ENCODE measurements at regions of chr5 and their contacts with region 1.

Region 1: GRCh38 chr5:40736103-40736875 is 19.5 kb downstream of the TTC33 start:
- DNase-seq: no peak
- H3K4me3 Mint-ChIP-seq: no peak overlapping the region
- H3K27ac Mint-ChIP-seq: no peak overlapping the region
- H3K4me1 Mint-ChIP-seq: peaks cover 23% of the 10 kb centered on the region
- H3K27me3 Mint-ChIP-seq: no peaks in the 10 kb centered on the region

Region 2: DNA sequence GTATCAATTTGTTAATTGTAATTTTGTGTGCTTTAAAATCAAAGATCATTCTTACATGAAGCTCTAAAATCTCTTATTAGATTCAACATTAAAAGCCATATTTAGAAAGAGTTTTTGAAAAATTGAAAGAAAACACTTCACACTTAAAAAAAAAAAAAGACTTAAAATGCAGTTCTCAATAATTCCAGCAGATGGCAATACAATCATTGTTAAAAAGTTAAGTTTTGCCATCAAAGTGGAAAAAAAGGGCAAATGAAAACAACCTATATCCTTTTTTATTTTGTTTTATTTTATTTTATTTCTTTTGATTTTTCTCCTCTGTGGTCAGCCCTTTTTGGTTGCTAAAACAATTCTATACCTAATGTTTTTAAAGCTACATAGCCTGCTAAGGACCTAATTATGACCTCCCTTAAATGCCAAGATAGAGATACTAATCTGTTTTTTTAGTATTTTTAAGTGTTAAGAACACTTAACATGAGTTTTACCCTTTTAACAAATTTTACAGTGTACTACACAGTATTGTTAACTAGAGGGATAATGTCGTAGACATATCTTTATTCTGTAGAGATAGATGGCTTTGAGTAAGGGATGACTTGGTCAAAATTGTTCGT is 1157.3 kb before region 1 on chr5:
- CTCF ChIA-PET with region 1: no interaction called
- POLR2A ChIA-PET with region 1: no interaction called
- intact Hi-C with region 1: loop called (anchors 5 kb)
- DNase-seq: no peak
- H3K4me3 Mint-ChIP-seq: no peak overlapping the region
- H3K27ac Mint-ChIP-seq: no peak overlapping the region
- H3K4me1 Mint-ChIP-seq: peaks cover 6% of the 10 kb centered on the region
- H3K27me3 Mint-ChIP-seq: no peaks in the 10 kb centered on the region

Region 3: GRCh38 chr5:39599721-39600431 is 1136.4 kb before region 1 on chr5:
- CTCF ChIA-PET with region 1: no interaction called
- POLR2A ChIA-PET with region 1: no interaction called
- intact Hi-C with region 1: loop called (anchors 5 kb)
- DNase-seq: no peak
- H3K4me3 Mint-ChIP-seq: no peak overlapping the region
- H3K27ac Mint-ChIP-seq: no peak overlapping the region
- H3K4me1 Mint-ChIP-seq: no peaks in the 10 kb centered on the region
- H3K27me3 Mint-ChIP-seq: peaks cover 6% of the 10 kb centered on the region

Region 4: GRCh38 chr5:39714036-39714698 is 1022.1 kb before region 1 on chr5:
- CTCF ChIA-PET with region 1: interaction called, 8 read pairs
- POLR2A ChIA-PET with region 1: no interaction called
- intact Hi-C with region 1: loop called (anchors 1 kb)
- DNase-seq: peak; percentile 29
- H3K4me3 Mint-ChIP-seq: no peak overlapping the region
- H3K27ac Mint-ChIP-seq: no peak overlapping the region
- H3K4me1 Mint-ChIP-seq: no peaks in the 10 kb centered on the region
- H3K27me3 Mint-ChIP-seq: no peaks in the 10 kb centered on the region

Region 5: GRCh38 chr5:39948867-39949468 is 787.3 kb before region 1 on chr5:
- CTCF ChIA-PET with region 1: interaction called, 20 read pairs
- POLR2A ChIA-PET with region 1: no interaction called
- intact Hi-C with region 1: loop called (anchors 1 kb)
- DNase-seq: peak; percentile 54
- H3K4me3 Mint-ChIP-seq: no peak overlapping the region
- H3K27ac Mint-ChIP-seq: peak overlapping the region; percentile 4
- H3K4me1 Mint-ChIP-seq: peaks cover 3% of the 10 kb centered on the region
- H3K27me3 Mint-ChIP-seq: no peaks in the 10 kb centered on the region

Region 6: DNA sequence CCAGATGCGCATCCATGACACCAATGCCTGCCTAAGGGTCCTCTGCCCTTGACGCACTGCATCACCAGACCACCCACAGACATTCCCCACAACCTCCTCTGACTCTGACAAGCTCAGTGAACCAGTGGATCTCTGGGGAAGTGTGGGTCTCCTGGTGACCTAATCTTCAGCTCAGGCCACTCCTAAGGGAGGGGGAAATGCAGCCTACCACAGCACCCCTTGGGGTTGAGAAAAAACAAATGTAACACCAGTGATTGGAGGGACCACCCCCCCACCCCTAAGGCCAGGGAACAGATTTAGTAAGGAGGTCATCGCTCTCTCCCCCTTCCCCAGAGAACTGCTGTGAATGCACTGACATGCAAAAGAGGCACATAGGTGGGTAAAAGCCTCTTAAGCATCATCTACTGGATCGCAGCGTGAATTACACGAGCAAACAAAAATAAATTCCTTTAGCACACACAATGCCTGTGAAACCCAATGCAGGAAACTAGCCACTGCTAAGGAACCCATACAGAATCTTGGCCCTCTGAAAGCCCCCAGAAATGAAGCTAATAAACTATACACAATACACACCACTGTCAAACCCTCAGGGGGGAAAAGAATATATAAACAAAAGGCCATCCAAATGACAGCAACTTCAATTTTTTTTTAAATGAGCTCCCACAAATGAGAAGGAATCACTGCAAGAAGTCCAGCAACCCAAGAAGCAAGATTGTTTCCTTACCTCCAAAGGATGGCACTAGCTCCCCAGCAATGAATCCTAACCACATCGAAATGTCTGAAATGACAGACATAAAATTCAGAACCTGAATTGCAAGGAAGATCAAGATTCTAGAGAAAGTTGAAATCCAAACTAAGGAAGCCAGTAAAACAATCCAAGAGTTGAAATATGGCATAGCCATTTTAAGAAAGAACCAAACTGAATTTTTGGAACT is 570.2 kb before region 1 on chr5:
- CTCF ChIA-PET with region 1: no interaction called
- POLR2A ChIA-PET with region 1: no interaction called
- intact Hi-C with region 1: loop called (anchors 2 kb)
- DNase-seq: peak; percentile 32
- H3K4me3 Mint-ChIP-seq: no peak overlapping the region
- H3K27ac Mint-ChIP-seq: no peak overlapping the region
- H3K4me1 Mint-ChIP-seq: peaks cover 12% of the 10 kb centered on the region
- H3K27me3 Mint-ChIP-seq: peaks cover 2% of the 10 kb centered on the region

Region 7: DNA sequence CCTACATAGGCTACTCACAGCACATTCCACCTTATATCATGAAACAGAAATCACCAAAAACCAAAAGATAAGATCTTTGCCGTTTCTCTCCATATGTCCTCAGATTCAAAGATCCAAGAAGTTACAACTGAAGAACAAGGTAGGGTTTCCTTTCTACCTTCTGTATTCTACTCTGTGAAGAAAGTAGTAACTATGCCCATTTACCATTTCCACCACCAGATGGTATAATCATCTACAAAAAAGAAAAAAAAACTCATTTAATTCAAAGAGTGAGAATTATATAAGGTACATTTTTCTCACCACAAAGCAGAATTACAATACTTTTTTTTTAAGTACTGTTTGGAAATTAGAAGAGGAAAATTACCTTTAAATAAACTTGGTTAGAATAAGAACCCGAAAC is 229.2 kb before region 1 on chr5:
- CTCF ChIA-PET with region 1: interaction called, 3 read pairs
- POLR2A ChIA-PET with region 1: no interaction called
- intact Hi-C with region 1: loop called (anchors 2 kb)
- DNase-seq: no peak
- H3K4me3 Mint-ChIP-seq: no peak overlapping the region
- H3K27ac Mint-ChIP-seq: no peak overlapping the region
- H3K4me1 Mint-ChIP-seq: peaks cover 11% of the 10 kb centered on the region
- H3K27me3 Mint-ChIP-seq: no peaks in the 10 kb centered on the region

Region 8: GRCh38 chr5:40904205-40904993 is 168.1 kb after region 1 on chr5:
- CTCF ChIA-PET with region 1: no interaction called
- POLR2A ChIA-PET with region 1: no interaction called
- intact Hi-C with region 1: no loop called
- DNase-seq: peak; percentile 56
- H3K4me3 Mint-ChIP-seq: no peak overlapping the region
- H3K27ac Mint-ChIP-seq: no peak overlapping the region
- H3K4me1 Mint-ChIP-seq: no peaks in the 10 kb centered on the region
- H3K27me3 Mint-ChIP-seq: peaks cover 1% of the 10 kb centered on the region

Region 9: GRCh38 chr5:41747301-41747700 is 1011.0 kb after region 1 on chr5:
- CTCF ChIA-PET with region 1: no interaction called
- POLR2A ChIA-PET with region 1: no interaction called
- intact Hi-C with region 1: no loop called
- DNase-seq: no peak
- H3K4me3 Mint-ChIP-seq: no peak overlapping the region
- H3K27ac Mint-ChIP-seq: no peak overlapping the region
- H3K4me1 Mint-ChIP-seq: peaks cover 24% of the 10 kb centered on the region
- H3K27me3 Mint-ChIP-seq: no peaks in the 10 kb centered on the region